ENCODE measurements at regions of chr22 and their contacts with region 1.

Region 1: DNA sequence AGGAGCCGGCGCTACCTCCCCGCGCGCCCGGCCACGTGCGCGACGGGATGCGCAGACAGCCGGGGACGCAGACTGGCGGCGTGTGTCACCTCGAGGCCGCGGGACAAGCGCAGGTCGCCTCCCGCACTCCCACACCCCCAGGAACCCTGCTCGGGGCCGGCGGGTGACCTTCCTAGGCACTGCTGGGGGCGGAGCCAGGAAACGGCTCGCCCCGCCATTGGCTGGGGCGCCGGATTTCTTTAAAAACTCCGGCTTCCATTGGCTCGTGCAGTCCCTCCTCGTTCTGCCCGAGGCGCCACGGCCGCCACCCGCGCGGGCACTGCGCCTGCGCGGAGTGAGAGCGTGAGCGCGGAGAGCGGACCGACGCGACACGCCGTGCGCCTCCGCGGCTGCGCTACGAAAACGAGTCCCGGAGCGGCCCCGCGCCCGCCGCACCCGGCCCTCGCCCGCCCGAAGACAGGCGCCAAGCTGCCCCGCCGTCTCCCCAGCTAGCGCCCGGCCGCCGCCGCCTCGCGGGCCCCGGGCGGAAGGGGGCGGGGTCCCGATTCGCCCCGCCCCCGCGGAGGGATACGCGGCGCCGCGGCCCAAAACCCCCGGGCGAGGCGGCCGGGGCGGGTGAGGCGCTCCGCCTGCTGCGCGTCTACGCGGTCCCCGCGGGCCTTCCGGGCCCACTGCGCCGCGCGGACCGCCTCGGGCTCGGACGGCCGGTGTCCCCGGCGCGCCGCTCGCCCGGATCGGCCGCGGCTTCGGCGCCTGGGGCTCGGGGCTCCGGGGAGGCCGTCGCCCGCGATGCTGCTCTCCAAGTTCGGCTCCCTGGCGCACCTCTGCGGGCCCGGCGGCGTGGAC is at the start of gene PIM3:
- DNase-seq: peak; percentile 97
- total RNA-seq, gene PIM3: 31.3 TPM

Region 2: DNA sequence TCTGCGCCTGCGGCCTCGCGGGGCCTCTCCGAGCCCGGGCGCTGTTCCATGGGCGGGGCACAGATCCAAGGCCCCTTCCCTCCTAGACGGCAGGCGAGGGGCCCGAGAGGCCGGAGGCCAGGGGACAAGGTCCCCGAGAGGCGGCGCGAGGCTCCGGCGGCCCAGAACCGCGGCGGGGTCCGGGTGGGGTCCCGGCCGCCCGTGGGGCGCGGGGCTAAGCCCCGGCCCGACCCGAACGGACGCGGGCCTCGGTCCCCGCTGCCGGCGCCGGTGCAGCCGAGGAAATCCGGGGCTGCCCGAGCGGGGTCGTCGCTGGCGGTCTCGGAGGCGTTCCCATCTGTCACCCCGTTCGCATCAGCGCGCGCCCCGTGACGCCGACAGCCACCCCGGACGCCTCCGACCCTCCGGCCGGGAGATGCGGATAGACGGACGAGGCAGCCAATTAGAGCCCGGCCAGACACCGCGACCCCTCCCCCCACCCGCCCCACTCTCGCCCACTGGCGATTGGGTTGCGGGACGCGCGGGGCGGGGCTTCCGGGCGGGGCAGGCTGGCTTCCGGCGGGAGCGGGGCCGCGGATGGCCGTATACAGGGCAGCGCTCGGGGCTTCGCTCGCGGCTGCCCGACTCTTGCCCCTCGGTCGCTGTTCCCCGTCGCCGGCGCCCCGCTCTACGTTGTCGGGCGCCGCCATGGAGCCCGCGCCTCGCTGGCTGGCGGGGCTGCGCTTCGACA is 240.2 kb after region 1 on chr22 and contains the start of gene SELENOO:
- intact Hi-C with region 1: loop called (anchors 10 kb)
- DNase-seq: peak; percentile 95
- total RNA-seq, gene SELENOO: 12.7 TPM